ENCODE measurements at regions of chr4 and their contacts with region 1.

Region 1: GRCh38 chr4:156419080-156419685 is 465.5 kb upstream of the CTSO start:
- DNase-seq: no peak
- H3K4me3 ChIP-seq: no peak overlapping the region
- H3K27ac ChIP-seq: no peak overlapping the region
- H3K4me1 ChIP-seq: no peaks in the 10 kb centered on the region
- H3K27me3 ChIP-seq: no peaks in the 10 kb centered on the region
- CTCF ChIP-seq: no peak
- POLR2A ChIP-seq: no peak

Region 2: GRCh38 chr4:156173937-156174336 is 245.2 kb before region 1 on chr4:
- intact Hi-C with region 1: no loop called
- DNase-seq: no peak
- H3K4me3 ChIP-seq: no peak overlapping the region
- H3K27ac ChIP-seq: no peak overlapping the region
- H3K4me1 ChIP-seq: no peaks in the 10 kb centered on the region
- H3K27me3 ChIP-seq: no peaks in the 10 kb centered on the region
- CTCF ChIP-seq: no peak
- POLR2A ChIP-seq: no peak

Region 3: DNA sequence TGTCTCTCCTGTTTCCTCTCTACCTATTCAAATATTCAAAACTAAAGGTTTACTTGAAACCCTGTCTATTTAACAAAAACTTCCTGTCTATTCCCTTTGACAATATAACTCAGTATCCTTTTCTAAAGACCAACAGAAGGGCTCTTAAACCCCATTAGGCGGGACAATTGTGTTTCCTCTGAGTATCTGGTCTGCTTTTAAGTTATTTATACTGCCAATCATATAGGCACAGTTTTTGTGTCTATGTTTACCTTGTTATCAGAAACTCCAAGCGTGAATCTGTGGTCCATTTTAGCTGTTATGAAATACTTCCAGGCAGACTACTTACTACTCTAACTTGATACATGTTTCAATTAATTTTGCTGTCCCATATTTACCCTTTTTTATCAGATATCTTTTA is 115.5 kb before region 1 on chr4:
- intact Hi-C with region 1: no loop called
- DNase-seq: no peak
- H3K4me3 ChIP-seq: no peak overlapping the region
- H3K27ac ChIP-seq: no peak overlapping the region
- H3K4me1 ChIP-seq: no peaks in the 10 kb centered on the region
- H3K27me3 ChIP-seq: no peaks in the 10 kb centered on the region
- CTCF ChIP-seq: no peak
- POLR2A ChIP-seq: no peak

Region 4: GRCh38 chr4:156584100-156584499 is 164.9 kb after region 1 on chr4:
- intact Hi-C with region 1: loop called (anchors 10 kb)
- DNase-seq: peak; percentile 35
- H3K4me3 ChIP-seq: no peak overlapping the region
- H3K27ac ChIP-seq: peak overlapping the region in 1 of 2 donors; percentile 18
- H3K4me1 ChIP-seq: peaks cover 2% of the 10 kb centered on the region
- H3K27me3 ChIP-seq: no peaks in the 10 kb centered on the region
- CTCF ChIP-seq: no peak
- POLR2A ChIP-seq: no peak